Posterior vena cava (tissue), 2 donors: ENCODE measurements at regions of chr11 and their contacts with region 1.

Region 1: DNA sequence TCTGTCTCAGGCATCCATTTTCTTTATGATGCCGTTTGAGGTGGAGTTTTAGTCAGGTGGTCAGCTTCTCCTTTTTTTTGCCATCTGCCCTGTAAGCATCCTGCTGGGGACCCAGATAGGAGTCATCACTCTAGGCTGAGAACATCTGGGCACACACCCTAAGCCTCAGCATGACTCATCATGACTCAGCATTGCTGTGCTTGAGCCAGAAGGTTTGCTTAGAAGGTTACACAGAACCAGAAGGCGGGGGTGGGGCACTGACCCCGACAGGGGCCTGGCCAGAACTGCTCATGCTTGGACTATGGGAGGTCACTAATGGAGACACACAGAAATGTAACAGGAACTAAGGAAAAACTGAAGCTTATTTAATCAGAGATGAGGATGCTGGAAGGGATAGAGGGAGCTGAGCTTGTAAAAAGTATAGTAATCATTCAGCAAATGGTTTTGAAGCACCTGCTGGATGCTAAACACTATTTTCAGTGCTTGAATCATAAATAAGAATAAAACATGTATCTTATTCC is 10.9 kb upstream of the HBE1 start:
- DNase-seq: peak; percentile 90

Region 2: DNA sequence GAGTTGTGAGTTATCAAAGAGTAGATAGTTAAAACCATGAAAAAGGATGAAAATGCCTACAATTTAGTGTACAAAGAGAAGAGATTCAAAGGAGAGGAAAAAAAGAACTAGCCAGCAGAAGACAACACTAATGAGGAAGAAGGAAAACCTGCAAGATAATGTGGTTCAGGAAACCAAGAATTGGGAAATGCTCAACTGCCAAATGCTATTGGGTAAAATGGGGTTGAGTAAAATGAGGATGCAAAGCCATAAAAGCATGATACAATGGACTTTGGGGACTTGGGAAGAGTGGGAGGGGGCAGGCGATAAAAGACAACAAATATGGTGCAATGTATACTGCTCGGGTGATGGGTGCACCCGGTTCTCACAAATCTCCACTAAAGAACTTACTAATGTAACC is 839.1 kb before region 1 on chr11:
- intact Hi-C with region 1: loop called in 1 of 2 experiments (anchors 10 kb)
- DNase-seq: no peak

Region 3: DNA sequence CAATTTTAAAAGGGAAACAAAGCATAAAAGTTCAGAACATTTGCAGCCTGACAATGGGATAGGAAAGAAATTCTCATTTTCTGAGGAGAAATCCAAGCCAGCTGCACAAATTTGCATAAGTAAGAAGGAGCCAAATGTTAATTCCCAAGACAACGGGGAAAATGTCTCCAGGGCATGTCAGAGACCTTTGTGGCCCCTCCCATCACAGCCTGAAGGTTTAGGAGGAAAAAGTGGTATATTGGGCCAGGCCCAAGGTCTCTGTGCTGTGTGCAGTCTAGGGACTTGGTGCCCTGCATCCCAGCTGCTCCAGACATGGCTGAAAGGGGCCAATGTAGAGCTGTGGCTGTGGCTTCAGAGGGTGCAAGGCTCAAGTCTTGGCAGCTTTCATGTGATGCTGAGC is 498.2 kb before region 1 on chr11:
- intact Hi-C with region 1: loop called in 1 of 2 experiments (anchors 10 kb)
- DNase-seq: no peak

Region 4: GRCh38 chr11:5204787-5205186 is 75.9 kb before region 1 on chr11:
- intact Hi-C with region 1: loop called in 1 of 2 experiments (anchors 10 kb)
- DNase-seq: no peak

Region 5: GRCh38 chr11:5234381-5234834 is 46.2 kb before region 1 on chr11 and contains the start of gene HBD:
- intact Hi-C with region 1: no loop called
- DNase-seq: no peak
- total RNA-seq, gene HBD: 1.4 to 4.8 TPM